ENCODE measurements at regions of chr15 and their contacts with region 1.

Region 1: DNA sequence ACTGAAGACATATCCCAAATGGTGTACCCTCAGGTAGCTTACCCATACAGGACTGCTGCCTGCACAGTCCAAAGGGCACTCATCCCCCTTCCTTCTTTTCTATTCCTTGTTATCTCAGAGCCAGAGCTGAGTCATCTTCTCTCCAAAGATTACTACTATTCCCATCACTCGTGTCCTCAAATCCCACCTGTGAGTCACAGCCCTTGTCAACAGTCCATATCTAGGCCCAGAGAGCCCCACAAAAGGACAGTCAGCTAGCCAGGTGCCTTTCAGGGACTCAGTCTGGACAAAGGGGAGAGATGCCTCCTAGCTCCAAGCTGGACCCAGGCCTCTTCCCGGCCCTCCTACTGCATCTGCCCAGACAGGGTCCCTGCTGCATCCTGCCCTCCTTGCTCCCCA is 11.0 kb downstream of the PARP16 start:
- DNase-seq: no peak
- H3K4me3 ChIP-seq: no peak overlapping the region
- H3K4me1 ChIP-seq: peaks cover 2% of the 10 kb centered on the region
- H3K27me3 ChIP-seq: no peaks in the 10 kb centered on the region

Region 2: DNA sequence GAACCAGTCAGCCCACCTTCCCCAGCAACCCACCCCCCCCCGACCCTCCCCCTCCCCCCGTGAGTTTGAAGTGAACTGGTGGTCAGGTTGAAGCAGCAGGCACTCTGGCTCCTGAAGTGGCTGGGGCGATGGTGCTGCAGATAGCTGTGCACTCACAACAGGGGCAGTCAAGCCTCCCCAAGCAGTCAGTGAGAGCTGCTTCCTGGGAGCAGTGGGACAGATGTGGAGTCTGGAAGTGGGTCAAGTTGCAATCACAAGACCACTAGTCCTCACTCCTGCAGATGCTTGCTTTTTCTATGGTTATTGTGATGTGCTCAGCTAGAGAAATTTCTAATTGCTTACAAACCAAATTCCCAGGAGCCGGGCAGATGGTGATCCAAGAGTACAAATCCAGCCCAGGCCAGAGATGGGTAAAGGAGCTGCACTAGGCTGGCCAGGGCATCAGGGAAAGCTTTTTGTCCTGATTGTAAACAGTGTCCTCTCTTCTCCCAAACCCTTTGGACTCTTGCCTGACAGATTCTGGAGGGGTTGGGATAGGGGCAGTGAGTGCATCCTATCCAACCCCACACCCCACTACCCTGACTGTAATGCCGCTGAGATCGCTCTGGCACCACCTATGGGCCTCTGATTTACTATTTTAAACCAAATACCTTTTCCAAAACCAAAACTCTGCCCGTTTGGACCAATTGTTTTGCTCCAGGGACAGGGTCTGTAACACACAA is 80.7 kb before region 1 on chr15:
- in situ Hi-C with region 1: loop called (anchors 5 kb)
- DNase-seq: no peak
- H3K4me3 ChIP-seq: no peak overlapping the region
- H3K4me1 ChIP-seq: no peaks in the 10 kb centered on the region
- H3K27me3 ChIP-seq: no peaks in the 10 kb centered on the region

Region 3: GRCh38 chr15:65738649-65739048 is 462.9 kb after region 1 on chr15:
- in situ Hi-C with region 1: no loop called
- DNase-seq: no peak
- H3K4me3 ChIP-seq: no peak overlapping the region
- H3K4me1 ChIP-seq: peaks cover 8% of the 10 kb centered on the region
- H3K27me3 ChIP-seq: no peaks in the 10 kb centered on the region